ENCODE measurements at regions of chr2 and their contacts with region 1.

Region 1: DNA sequence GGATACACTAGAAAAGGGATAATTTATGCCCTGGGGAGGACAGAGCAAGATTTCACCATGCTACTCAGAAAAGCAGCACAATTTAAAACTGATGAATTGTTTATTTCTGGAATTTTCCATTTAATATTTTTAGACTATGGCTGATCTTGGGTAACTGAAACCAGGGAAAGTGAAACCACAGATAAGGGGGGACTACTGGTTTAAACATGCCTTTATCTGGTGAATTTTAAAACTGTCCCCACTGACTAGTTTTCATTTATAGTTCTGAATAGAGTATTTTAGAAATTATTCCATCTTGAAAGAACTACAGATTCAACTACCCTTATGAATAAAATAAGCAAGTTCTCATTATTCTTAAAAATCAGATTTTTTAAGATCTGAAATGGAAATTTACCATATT is 15.0 kb downstream of the NFU1 start:
- DNase-seq: no peak
- ATAC-seq: no peak
- H3K4me3 Mint-ChIP-seq: no peak overlapping the region
- H3K27ac Mint-ChIP-seq: peak overlapping the region; percentile 28
- H3K4me1 Mint-ChIP-seq: peaks cover 5% of the 10 kb centered on the region
- H3K27me3 Mint-ChIP-seq: no peaks in the 10 kb centered on the region

Region 2: DNA sequence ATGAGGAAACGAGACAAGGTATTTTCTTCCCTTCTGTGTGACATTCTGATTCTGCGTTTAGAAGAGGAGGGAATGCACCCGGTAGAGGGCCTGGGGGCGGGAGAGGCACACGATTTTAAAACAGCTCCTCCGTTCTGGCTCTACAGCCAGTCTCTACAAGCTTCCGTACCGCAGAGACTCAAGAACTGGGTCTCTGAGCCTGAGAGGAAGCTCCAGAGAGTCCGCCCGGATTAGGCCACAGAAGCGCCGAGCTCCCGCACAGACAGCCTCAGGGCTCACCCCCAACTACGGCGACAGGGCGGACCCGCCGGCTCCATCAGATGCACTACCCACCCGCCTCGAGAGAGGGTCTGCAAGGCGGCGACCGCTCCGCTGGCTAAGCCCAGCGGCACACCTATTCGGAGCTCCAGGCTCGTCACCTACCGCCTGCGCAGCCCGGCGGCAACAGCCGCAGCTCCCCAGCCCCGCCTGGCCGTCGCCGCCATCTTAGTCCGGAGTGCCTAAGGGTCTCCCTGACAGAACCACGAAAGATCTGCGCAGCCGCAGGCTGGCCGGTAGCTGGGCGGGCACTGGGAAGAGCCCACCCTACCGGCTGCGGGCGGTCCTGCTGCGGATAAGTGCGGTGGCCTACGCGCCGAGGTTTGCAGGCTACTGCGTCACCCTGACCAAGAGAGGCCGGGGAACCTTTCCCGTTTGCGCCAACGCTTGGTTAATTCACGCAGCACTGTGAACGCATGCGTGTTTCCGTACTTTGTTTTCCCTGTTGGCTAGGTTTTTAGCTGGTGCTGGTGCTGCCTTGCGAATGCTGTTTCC is 14.9 kb after region 1 on chr2 and contains the start of gene NFU1:
- CTCF ChIA-PET with region 1: interaction called, 12 read pairs
- DNase-seq: peak; percentile 93
- ATAC-seq: peak; percentile 95
- H3K4me3 Mint-ChIP-seq: peak within 1 kb of the TSS; percentile 95
- H3K27ac Mint-ChIP-seq: peak within 1 kb of the TSS; percentile 91
- H3K4me1 Mint-ChIP-seq: peaks cover 24% of the 10 kb centered on the region
- H3K27me3 Mint-ChIP-seq: no peaks in the 10 kb centered on the region
- total RNA-seq, gene NFU1: 28.5 to 40.9 TPM

Measured in activated CD8-positive, alpha-beta memory T cell treated with anti-CD3 and anti-CD28 coated beads, Interleukin-2, amount 10 ng/mL, durations not matched to agents 7 days and 5 days (primary cell).